ENCODE measurements at regions of chr10 and their contacts with region 1.

Region 1: DNA sequence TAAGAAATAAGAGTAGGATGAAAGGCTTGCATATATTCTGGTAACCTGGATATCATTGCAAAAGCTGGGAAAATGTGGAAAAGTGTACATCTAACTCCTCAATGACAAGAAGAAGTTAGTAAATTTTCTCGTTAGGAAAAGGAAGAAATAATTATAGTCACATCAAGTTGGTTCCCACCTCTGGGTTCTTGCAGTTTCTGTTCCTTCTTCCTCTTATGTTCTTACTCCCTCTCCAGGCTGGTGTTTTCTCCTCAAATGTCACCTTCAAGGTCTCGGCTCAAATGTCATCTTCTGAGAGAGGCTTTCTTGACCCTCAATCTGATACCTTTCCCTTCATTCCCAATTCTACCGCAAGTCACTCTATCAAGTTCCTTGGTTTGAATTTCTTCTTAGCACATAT is 64.4 kb downstream of the ENTPD1 start:
- DNase-seq: no peak
- ATAC-seq: peak; percentile 76
- H3K4me3 ChIP-seq: no peak overlapping the region
- H3K27ac ChIP-seq: peak overlapping the region; percentile 85
- H3K4me1 ChIP-seq: peaks cover 41% of the 10 kb centered on the region
- H3K27me3 ChIP-seq: no peaks in the 10 kb centered on the region
- CTCF ChIP-seq: peak in 1 of 3 experiments; percentile 35; a peak in 2 of 6 replicates
- EP300 ChIP-seq: peak in 1 of 2 experiments; percentile 60; a peak in 2 of 4 replicates
- POLR2A ChIP-seq: no peak
- RAD21 ChIP-seq: peak; percentile 51

Region 2: DNA sequence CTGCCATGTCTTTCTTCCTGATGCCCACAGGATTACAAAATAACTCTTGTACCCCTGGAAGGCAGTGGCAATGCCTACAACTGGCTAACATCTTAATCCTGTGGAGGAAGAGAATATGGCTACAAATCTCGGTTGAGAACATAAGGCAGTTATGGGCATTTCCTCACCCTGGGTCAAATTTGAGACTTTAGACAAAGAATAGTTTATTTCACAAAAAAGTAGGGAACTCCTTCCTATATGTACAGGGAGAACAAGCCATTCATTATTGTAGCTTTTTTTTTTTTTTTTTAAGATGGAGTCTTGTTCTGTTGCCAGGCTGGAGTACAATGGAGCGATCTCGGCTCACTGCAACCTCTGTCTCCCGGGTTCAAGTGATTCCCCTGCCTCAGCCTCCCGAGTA is 166.5 kb before region 1 on chr10:
- CTCF ChIA-PET with region 1: no interaction called
- POLR2A ChIA-PET with region 1: interaction called, 13 read pairs
- RAD21 ChIA-PET with region 1: no interaction called
- SMC1A ChIA-PET with region 1: no interaction called
- in situ Hi-C with region 1: no loop called
- intact Hi-C with region 1: no loop called
- DNase-seq: no peak
- ATAC-seq: no peak
- H3K4me3 ChIP-seq: peak overlapping the region; percentile 5; the same call in 1 of the 2 replicates
- H3K27ac ChIP-seq: no peak overlapping the region
- H3K4me1 ChIP-seq: peaks cover 5% of the 10 kb centered on the region
- H3K27me3 ChIP-seq: no peaks in the 10 kb centered on the region
- CTCF ChIP-seq: no peak
- EP300 ChIP-seq: no peak
- POLR2A ChIP-seq: no peak
- RAD21 ChIP-seq: no peak

Region 3: DNA sequence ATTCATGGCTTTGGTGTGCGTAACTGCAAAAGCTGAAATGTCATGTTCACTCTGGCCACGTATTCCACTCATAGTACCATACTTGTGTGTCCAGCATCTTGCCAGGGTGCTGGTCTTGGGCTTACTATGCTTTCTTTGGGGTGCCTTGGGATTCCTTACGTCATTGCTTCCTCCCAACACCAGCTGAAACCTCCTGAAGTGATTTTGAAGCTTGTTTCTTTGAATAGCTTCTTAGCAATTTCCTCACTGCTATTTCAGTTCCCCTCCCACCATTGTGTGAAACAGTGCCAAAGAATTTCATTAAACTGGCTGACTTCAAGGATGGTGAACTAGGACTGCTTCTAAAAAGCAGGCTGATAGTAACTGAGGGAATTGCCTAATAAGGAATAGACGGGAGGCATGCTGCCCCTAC is 27.5 kb before region 1 on chr10:
- CTCF ChIA-PET with region 1: interaction called, 9 read pairs
- POLR2A ChIA-PET with region 1: interaction called, 451 read pairs
- RAD21 ChIA-PET with region 1: interaction called, 108 read pairs
- SMC1A ChIA-PET with region 1: interaction called, 170 read pairs
- in situ Hi-C with region 1: no loop called
- intact Hi-C with region 1: loop called (anchors 2 kb)
- DNase-seq: peak; percentile 77
- ATAC-seq: peak; percentile 31
- H3K4me3 ChIP-seq: peak overlapping the region; percentile 18; the same call in 1 of the 2 replicates
- H3K27ac ChIP-seq: peak overlapping the region; percentile 93
- H3K4me1 ChIP-seq: peaks cover 64% of the 10 kb centered on the region
- H3K27me3 ChIP-seq: no peaks in the 10 kb centered on the region
- CTCF ChIP-seq: no peak
- EP300 ChIP-seq: peak; percentile 54; a peak in 1 of 4 replicates
- POLR2A ChIP-seq: no peak
- RAD21 ChIP-seq: 0 out of 2 replicates have a peak, but pooled peaks have one; percentile 4

Region 4: GRCh38 chr10:95877881-95878280 is 57.5 kb after region 1 on chr10:
- CTCF ChIA-PET with region 1: no interaction called
- POLR2A ChIA-PET with region 1: no interaction called
- RAD21 ChIA-PET with region 1: no interaction called
- SMC1A ChIA-PET with region 1: no interaction called
- in situ Hi-C with region 1: no loop called
- intact Hi-C with region 1: no loop called
- DNase-seq: no peak
- ATAC-seq: peak; percentile 58
- H3K4me3 ChIP-seq: no peak overlapping the region
- H3K27ac ChIP-seq: no peak overlapping the region
- H3K4me1 ChIP-seq: peaks cover 16% of the 10 kb centered on the region; the same call in 1 of the 2 replicates
- H3K27me3 ChIP-seq: no peaks in the 10 kb centered on the region
- CTCF ChIP-seq: no peak
- EP300 ChIP-seq: no peak
- POLR2A ChIP-seq: no peak
- RAD21 ChIP-seq: no peak